Activated CD4-positive, alpha-beta memory T cell treated with anti-CD3 and anti-CD28 coated beads for 36 hours (primary cell): ENCODE measurements at regions of chr3 and their contacts with region 1.

Region 1: DNA sequence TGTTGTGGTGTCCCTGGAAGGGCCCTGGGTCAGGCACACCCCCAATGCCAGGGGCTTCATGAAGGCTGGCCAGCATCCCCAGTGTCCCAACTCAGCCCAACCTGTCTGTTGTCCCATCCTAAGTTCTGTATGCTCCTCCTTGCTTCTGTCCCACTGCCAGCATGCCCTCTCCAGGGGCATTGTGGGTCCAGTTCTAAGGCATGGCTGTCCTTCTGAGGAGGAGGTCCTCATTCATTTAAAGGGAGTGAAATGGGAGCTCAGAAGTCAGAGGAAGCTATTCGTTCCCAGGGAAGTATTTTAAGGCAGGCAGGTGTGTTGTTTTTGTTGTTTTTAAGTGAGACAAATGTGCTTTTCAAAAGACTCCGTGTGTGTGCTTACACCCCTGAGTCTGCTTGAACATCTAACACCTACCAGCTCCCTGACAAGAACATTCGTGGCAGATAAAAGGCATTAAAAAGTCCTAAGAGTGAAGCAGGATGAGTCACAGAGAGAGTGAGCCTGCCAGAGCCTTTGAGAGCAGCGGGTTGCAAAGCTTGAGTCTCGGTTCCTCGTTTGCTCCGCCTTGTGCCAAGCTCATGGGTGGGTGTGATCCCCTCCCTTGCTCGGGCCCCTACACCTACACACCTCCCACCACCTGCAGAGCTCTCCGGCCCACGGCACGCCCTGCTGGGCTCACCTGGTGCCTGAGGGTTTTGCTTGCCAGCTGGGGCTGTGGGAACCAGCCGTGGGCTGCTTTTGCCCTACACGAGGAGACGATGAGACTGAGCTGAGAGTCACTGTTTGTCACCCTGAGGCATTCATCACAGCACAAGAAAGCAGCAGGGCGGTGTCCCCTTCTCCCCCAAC is 183.4 kb upstream of the TOPAZ1 start:
- DNase-seq: peak; percentile 39
- H3K4me3 Mint-ChIP-seq: peak overlapping the region; percentile 47
- H3K27ac Mint-ChIP-seq: no peak overlapping the region
- H3K4me1 Mint-ChIP-seq: peaks cover 15% of the 10 kb centered on the region
- H3K27me3 Mint-ChIP-seq: peaks cover 45% of the 10 kb centered on the region

Region 2: DNA sequence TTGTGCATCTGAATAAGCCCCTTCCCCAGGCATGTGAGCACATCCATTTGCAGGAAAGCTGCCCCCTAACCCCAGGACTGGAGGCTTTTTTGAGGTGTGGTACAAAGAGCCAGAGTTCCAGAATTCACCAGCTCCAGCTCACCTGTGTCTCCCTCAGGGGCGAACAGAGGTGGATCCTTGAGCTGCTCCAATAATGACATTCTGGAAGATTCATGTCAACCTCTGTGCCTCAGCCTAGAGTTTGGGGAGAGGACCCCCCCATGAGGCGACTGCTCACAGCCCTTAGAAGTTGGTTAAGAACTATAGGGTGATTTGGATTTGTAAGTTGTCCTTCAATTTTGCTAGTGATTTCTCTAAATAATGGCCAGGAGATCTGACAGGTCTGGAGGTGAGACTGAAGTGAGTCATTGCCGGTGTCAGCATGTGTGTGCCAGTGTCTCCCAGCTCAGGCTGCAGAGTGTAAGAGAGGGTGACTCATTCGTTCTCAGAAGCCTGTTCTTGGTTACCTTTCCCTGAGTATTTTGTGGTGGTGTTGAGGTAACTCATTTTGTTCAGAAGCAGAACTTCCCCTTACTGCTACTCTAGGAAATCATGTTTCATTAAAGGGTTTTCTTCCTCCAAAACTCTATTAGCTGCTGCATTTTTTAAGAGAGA is 46.5 kb after region 1 on chr3:
- CTCF ChIA-PET with region 1: no interaction called
- POLR2A ChIA-PET with region 1: no interaction called
- intact Hi-C with region 1: loop called (anchors 2 kb)
- DNase-seq: peak; percentile 71
- H3K4me3 Mint-ChIP-seq: no peak overlapping the region
- H3K27ac Mint-ChIP-seq: no peak overlapping the region
- H3K4me1 Mint-ChIP-seq: peaks cover 11% of the 10 kb centered on the region
- H3K27me3 Mint-ChIP-seq: peaks cover 32% of the 10 kb centered on the region